ENCODE measurements at regions of chrX and their contacts with region 1.

Region 1: GRCh38 chrX:135531813-135532212 is 11.4 kb downstream of the INTS6L start:
- DNase-seq: peak in 1 of 4 experiments; percentile 38
- ATAC-seq: peak; percentile 18
- H3K4me3 ChIP-seq: no peak overlapping the region
- H3K27ac ChIP-seq: peak overlapping the region; percentile 53
- H3K4me1 ChIP-seq: peaks cover 11 to 74% of the 10 kb centered on the region in 2 experiments
- H3K27me3 ChIP-seq: no peaks in the 10 kb centered on the region
- CTCF ChIP-seq: no peak
- EP300 ChIP-seq: peak; percentile 40; the same call in 1 of the 2 replicates
- POLR2A ChIP-seq: no peak
- RAD21 ChIP-seq: no peak

Region 2: GRCh38 chrX:135521405-135522189 is 10.2 kb before region 1 on chrX:
- CTCF ChIA-PET with region 1: no interaction called
- POLR2A ChIA-PET with region 1: interaction called, 11 read pairs
- in situ Hi-C with region 1: no loop called
- intact Hi-C with region 1: no loop called
- DNase-seq: peak; percentile 84 to 93 (median 88)
- ATAC-seq: peak; percentile 82
- H3K4me3 ChIP-seq: peak overlapping the region; percentile 82
- H3K27ac ChIP-seq: peak overlapping the region; percentile 93
- H3K4me1 ChIP-seq: peaks cover 3 to 13% of the 10 kb centered on the region in 2 experiments; a peak in 3 of 5 replicates
- H3K27me3 ChIP-seq: no peaks in the 10 kb centered on the region
- CTCF ChIP-seq: no peak
- EP300 ChIP-seq: peak; percentile 32; the same call in 1 of the 2 replicates
- POLR2A ChIP-seq: peak; percentile 67
- RAD21 ChIP-seq: no peak